PC-9 (cell line): ENCODE measurements at regions of chr22 and their contacts with region 1.

Region 1: DNA sequence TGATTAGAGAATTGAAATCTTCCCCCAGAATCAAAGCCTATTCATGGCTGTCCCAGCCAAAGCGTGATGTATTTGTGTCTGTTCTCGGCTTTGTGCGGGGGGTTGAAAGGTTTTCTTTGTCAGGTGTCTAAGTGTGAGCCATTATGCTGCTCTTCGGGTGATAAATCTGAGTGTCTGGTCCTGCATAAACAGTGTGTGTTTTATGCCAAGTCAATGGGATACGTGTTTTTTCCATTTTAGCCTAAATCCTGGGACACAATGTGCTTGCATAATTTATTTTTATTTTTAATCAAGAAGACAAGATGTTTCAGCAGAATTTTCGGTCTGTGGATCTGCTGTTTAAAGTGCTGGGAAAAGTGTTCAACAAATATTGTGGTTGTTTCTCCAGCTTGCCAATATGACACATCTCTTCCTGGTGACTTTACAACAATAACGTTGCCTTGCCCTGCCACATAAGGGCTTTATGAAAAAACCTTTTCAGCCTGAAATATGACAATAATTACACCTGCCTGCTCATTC is 267.8 kb downstream of the TBC1D22A start:
- DNase-seq: no peak
- H3K4me3 ChIP-seq: no peak overlapping the region
- H3K27ac ChIP-seq: no peak overlapping the region
- H3K4me1 ChIP-seq: no peaks in the 10 kb centered on the region
- H3K27me3 ChIP-seq: no peaks in the 10 kb centered on the region
- CTCF ChIP-seq: no peak

Region 2: GRCh38 chr22:46947516-46948257 is 82.5 kb before region 1 on chr22:
- CTCF ChIA-PET with region 1: no interaction called
- POLR2A ChIA-PET with region 1: no interaction called
- intact Hi-C with region 1: no loop called
- DNase-seq: no peak
- H3K4me3 ChIP-seq: no peak overlapping the region
- H3K27ac ChIP-seq: no peak overlapping the region
- H3K4me1 ChIP-seq: no peaks in the 10 kb centered on the region
- H3K27me3 ChIP-seq: no peaks in the 10 kb centered on the region
- CTCF ChIP-seq: no peak

Region 3: DNA sequence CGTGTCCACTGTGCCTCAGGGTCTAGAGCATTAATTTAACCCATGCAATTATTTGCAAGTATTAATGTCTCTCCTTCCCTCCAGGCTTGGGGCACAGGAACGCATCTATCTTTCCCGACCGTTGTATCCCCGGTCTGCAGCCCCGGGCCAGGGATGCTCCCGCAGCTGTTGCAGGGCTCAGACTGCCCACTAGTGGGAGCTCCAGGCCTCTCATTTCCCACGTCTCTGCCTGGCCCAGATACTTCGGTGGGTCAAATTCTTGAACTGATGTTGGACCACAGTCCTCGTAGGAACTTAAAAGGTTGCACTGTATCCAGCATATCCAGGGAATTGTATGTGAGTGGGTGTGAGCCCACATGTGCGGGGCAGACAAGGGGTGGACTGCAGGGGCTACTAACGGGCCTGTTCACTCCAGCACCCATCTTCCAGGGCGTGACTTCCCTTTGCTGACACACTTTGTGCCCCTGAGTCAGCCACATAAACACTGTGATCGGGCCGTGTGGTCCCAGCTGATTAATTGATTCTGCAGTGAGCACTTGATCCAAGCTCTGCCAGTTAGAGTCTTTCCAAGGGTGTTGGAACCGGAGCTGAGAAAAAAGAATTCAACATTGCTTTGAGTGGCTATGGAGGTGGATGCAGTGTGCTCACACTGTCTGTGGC is 183.5 kb after region 1 on chr22:
- CTCF ChIA-PET with region 1: no interaction called
- POLR2A ChIA-PET with region 1: interaction called, 11 read pairs
- intact Hi-C with region 1: no loop called
- DNase-seq: peak in 1 of 2 experiments; percentile 31
- H3K4me3 ChIP-seq: no peak overlapping the region
- H3K27ac ChIP-seq: no peak overlapping the region
- H3K4me1 ChIP-seq: no peaks in the 10 kb centered on the region
- H3K27me3 ChIP-seq: peaks cover 46% of the 10 kb centered on the region
- CTCF ChIP-seq: peak; percentile 85